ENCODE measurements at regions of chr19 and their contacts with region 1.

Region 1: GRCh38 chr19:58439576-58440554 is at the start of gene ZNF132:
- DNase-seq: peak; percentile 98 to 99
- ATAC-seq: peak; percentile 100
- H3K4me3 ChIP-seq: peak within 1 kb of the TSS; percentile 78 to 95 (median 82)
- H3K27ac ChIP-seq: peak within 1 kb of the TSS; percentile 70 to 87 (median 78)
- H3K4me1 ChIP-seq: peaks cover 16 to 17% of the 10 kb centered on the region in 2 donors
- H3K27me3 ChIP-seq: no peaks in the 10 kb centered on the region
- CTCF ChIP-seq: no peak
- POLR2A ChIP-seq: peak; percentile 38 to 44
- total RNA-seq, gene ZNF132: 1.8 to 2.7 (median 2.4) TPM

Region 2: GRCh38 chr19:58182989-58183816 is 256.7 kb before region 1 on chr19 and contains the start of gene ZNF274:
- in situ Hi-C with region 1: no loop called
- intact Hi-C with region 1: loop called (anchors 2 kb)
- DNase-seq: peak; percentile 84 to 92
- ATAC-seq: peak; percentile 92 to 95
- H3K4me3 ChIP-seq: peak within 1 kb of the TSS; percentile 82 to 94 (median 92)
- H3K27ac ChIP-seq: peak within 1 kb of the TSS; percentile 92 to 99 (median 98)
- H3K4me1 ChIP-seq: peaks cover 0 to 5% of the 10 kb centered on the region in 2 donors
- H3K27me3 ChIP-seq: no peaks in the 10 kb centered on the region
- CTCF ChIP-seq: no peak
- POLR2A ChIP-seq: peak; percentile 88 to 94
- total RNA-seq, gene ZNF274: 9.0 to 20.7 (median 13.4) TPM

Region 3: GRCh38 chr19:58386576-58387337 is 53.1 kb before region 1 on chr19 and contains the start of gene RPS5:
- in situ Hi-C with region 1: no loop called
- intact Hi-C with region 1: loop called (anchors 2 kb)
- DNase-seq: peak; percentile 96 to 97
- ATAC-seq: peak; percentile 99
- H3K4me3 ChIP-seq: peak within 1 kb of the TSS; percentile 75 to 89 (median 78)
- H3K27ac ChIP-seq: peak within 1 kb of the TSS; percentile 95 to 100 (median 99)
- H3K4me1 ChIP-seq: peaks cover 33 to 35% of the 10 kb centered on the region in 2 donors
- H3K27me3 ChIP-seq: no peaks in the 10 kb centered on the region
- CTCF ChIP-seq: no peak
- POLR2A ChIP-seq: peak; percentile 85 to 88
- total RNA-seq, gene RPS5: 1,345 to 1,665 (median 1,438) TPM

Region 4: DNA sequence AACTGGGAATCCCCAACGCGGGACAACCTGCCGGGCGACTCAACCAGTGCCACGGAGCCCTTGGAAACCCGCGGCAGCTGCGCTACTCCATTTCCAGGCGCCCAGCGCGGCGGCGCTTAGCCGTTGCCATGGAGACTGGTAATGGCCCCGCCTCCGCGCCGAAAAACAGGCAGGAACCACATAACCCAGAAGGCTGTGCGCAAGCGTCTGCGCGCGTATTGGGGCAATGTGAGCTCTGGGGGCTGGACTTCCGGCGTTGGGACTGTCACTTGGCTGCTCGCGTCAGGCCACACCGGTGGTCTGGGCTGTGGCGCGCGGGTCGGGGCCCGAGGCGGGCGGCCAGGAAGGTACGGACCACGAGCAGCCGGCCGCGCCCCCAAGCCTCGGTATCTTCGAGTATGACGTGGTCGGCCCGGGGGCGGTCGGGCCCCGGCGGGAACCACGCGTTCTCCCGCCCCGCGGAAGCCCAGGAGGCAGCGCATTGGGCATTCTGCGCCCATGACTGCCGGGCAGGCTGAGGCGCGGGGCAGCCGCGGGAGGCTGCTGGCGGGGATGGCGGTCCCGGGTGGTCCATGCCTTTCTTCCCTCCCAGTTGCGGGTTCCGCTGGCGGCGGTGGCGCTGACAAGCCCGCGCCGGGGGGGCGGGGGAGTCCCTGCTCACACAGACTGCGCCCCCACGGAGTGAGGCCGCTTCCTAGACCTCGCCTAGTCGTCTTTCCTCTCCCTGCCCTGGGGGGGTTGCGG is 11.7 kb after region 1 on chr19 and contains the start of gene ZNF324B:
- in situ Hi-C with region 1: no loop called
- intact Hi-C with region 1: loop called (anchors 1 kb)
- DNase-seq: peak; percentile 91 to 95
- ATAC-seq: peak; percentile 99 to 100
- H3K4me3 ChIP-seq: peak within 1 kb of the TSS; percentile 83 to 96 (median 88)
- H3K27ac ChIP-seq: peak within 1 kb of the TSS; percentile 73 to 81 (median 78)
- H3K4me1 ChIP-seq: peaks cover 7 to 10% of the 10 kb centered on the region in 2 donors
- H3K27me3 ChIP-seq: peaks cover 0 to 11% (median 3%) of the 10 kb centered on the region in 3 donors
- CTCF ChIP-seq: no peak
- POLR2A ChIP-seq: peak; percentile 72 to 85
- total RNA-seq, gene ZNF324B: 3.8 to 7.6 (median 7.0) TPM

Region 5: GRCh38 chr19:58519355-58520256 is 79.7 kb after region 1 on chr19 and contains the start of gene ZBTB45:
- in situ Hi-C with region 1: no loop called
- intact Hi-C with region 1: no loop called
- DNase-seq: peak; percentile 86 to 90
- ATAC-seq: peak; percentile 93
- H3K4me3 ChIP-seq: peak within 1 kb of the TSS; percentile 69 to 88 (median 80)
- H3K27ac ChIP-seq: peak within 1 kb of the TSS; percentile 84 to 96 (median 94)
- H3K4me1 ChIP-seq: peaks cover 31 to 36% of the 10 kb centered on the region in 2 donors
- H3K27me3 ChIP-seq: no peaks in the 10 kb centered on the region
- CTCF ChIP-seq: peak; percentile 74 to 92 (median 87)
- POLR2A ChIP-seq: peak; percentile 11 to 34
- total RNA-seq, gene ZBTB45: 5.9 to 12.2 (median 9.6) TPM

Measured in gastrocnemius medialis (tissue), 4 donors.